PC-3 (cell line): ENCODE measurements at regions of chr5 and their contacts with region 1.

Region 1: DNA sequence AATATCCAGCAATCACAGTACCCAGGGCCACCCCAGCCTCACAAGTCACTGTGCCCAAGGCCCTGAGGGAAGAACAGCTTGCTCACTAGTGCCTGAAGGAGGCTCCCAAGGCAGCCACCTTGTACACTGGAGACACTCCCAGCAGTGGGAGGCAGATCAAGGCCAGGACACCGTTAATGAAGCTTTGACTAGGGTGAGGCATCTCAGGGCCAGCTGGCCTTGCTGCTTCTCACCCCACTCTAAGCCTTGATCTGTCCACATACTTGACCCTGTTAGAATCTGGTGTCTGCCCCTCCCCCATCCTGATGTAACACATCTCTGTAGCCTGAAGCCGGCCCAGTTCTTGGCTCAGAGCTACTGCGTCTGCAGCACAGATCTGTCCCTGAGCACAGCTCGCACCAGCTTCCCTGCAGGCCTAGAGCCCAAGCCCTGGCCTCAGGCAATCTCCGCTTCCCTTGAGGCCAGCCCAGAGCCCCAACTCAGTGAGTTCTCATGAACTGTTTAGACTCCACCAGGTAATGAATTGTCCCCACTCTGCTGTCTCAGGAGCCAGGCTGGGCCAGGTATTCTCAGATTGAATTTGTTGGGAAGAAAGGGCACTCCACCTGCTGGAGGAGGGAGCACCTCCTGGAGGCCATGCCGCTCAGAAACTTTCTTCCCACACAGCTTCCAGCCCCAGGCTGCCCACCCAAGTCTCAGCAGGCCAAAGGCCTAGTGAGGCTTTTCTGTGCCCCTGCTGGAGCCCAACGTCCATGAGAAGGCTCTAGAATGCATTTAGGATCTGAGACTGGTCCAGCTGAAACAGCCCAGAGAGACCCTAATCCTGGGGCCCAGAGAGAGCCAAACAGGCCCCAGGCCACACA is 13.5 kb upstream of the JADE2 start:
- DNase-seq: peak; percentile 53
- ATAC-seq: peak; percentile 25
- H3K4me3 ChIP-seq: no peak overlapping the region
- H3K27ac ChIP-seq: peak overlapping the region; percentile 90
- H3K4me1 ChIP-seq: peaks cover 50% of the 10 kb centered on the region
- H3K27me3 ChIP-seq: no peaks in the 10 kb centered on the region
- CTCF ChIP-seq: peak; percentile 52

Region 2: GRCh38 chr5:134436523-134437339 is 75.3 kb before region 1 on chr5:
- CTCF ChIA-PET with region 1: no interaction called
- POLR2A ChIA-PET with region 1: no interaction called
- intact Hi-C with region 1: loop called (anchors 5 kb)
- DNase-seq: peak; percentile 86
- ATAC-seq: peak; percentile 82
- H3K4me3 ChIP-seq: peak overlapping the region; percentile 42; the same call in 1 of the 2 replicates
- H3K27ac ChIP-seq: peak overlapping the region; percentile 99
- H3K4me1 ChIP-seq: peaks cover 52% of the 10 kb centered on the region
- H3K27me3 ChIP-seq: no peaks in the 10 kb centered on the region
- CTCF ChIP-seq: no peak

Region 3: DNA sequence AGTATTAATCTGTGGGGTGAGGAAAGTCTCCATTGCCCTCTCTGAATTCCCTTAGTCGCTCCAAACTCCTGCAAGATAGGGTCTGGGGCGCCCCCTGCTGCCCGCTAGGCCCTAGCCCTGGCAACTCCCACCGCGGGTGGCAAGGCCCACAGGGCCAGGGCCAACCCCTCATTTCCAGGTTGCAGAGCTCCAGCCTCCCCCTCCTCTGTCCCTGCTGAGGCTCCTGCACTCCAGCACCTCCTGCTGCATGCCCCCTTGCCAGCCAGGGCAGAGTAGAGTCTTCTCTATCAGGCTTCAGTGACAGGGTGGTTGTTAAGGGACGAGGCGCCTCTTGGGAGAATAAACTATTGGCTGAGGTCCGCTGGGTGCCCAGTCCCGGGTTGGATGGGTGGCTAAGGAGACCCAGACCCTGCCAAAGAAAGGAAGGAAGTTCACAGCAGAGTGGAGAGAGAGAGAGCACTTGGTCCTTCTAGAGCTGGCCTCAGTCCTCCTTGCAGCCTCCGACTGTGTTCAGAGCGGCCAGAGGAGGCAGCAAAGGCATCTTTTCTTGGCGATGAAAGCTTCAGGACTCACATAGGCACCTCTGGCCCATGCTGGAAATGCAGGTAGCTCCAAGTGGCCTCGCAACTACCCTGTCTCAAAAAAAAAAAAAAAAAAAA is 75.0 kb after region 1 on chr5:
- CTCF ChIA-PET with region 1: no interaction called
- POLR2A ChIA-PET with region 1: no interaction called
- intact Hi-C with region 1: no loop called
- DNase-seq: peak; percentile 78
- ATAC-seq: peak; percentile 90
- H3K4me3 ChIP-seq: no peak overlapping the region
- H3K27ac ChIP-seq: no peak overlapping the region
- H3K4me1 ChIP-seq: peaks cover 13% of the 10 kb centered on the region
- H3K27me3 ChIP-seq: no peaks in the 10 kb centered on the region
- CTCF ChIP-seq: peak; percentile 86